ENCODE measurements at regions of chrX and their contacts with region 1.

Region 1: DNA sequence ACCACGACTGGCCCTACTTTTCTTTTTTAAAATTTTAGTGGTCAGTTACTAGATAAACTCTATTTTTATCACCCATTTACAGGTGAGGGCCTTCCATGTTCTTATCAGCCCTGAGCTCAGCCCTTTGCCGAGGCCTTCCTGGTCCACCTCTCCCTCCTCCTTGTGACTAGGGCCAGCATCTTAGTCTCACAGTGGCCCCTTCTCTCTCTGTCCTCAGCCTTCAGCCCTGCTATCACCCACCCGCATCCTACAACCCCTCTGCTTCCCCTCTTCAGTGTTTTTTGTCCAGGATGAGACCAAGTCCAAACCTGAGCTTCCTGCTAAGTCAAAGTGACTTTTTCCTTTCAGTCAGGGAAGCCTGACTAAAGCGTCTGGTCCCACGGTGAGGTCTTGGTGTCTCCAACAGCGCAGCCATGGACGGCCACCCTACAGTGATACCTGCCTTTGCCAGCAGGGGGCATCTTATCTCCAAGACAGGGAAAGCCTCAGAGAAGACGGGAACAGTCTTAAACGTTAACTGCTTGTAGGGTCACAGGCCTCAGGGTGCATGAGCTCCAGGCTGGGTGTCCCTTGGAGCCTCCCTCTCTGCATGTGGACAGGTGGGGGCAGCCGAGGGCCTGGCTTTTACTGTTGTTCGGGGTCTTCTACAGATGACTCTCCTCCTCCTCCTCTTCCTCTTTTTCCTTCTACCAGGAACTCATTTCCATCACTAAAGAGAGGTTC is 11.7 kb upstream of the GAGE10 start:
- DNase-seq: peak; percentile 84
- H3K4me3 ChIP-seq: no peak overlapping the region
- H3K27ac ChIP-seq: no peak overlapping the region
- H3K4me1 ChIP-seq: peaks cover 0 to 11% (median 1%) of the 10 kb centered on the region in 6 donors
- H3K27me3 ChIP-seq: no peaks in the 10 kb centered on the region
- CTCF ChIP-seq: peak; percentile 53 to 78 (median 66)
- POLR2A ChIP-seq: no peak

Region 2: DNA sequence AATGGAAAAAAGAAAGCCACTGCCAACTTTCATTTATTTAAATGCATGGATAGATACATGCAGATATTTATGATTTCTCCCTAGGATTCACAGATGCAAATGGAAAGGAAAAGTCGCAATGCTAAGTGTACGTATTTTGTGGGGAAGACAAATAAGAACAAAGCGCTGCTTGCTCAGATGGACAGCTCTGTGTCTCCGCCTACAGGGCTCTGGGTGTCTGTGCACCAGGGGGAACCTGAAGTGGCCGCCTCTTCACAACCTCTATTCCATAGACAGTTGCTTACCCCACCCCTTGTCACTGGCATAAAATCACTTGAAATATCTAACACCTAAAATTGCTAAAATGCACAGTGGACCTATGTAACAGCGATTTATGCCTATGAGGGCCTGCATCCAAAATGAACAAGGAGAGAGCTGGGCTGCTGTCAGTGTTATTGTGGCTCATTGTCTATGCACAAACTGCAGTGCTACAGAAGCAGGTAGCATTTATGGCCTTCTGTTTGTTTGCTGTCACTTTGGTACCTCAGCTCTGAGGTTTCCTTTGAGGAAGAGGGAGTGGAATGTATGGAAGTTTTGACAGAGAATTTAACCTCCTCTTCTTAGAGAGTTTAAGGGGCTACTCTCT is 462.6 kb after region 1 on chrX:
- intact Hi-C with region 1: loop called (anchors 2 kb)
- DNase-seq: no peak
- H3K4me3 ChIP-seq: no peak overlapping the region
- H3K27ac ChIP-seq: no peak overlapping the region
- H3K4me1 ChIP-seq: no peaks in the 10 kb centered on the region
- H3K27me3 ChIP-seq: peaks cover 0 to 29% (median 0%) of the 10 kb centered on the region in 7 donors
- CTCF ChIP-seq: peak in 10 of 11 experiments; percentile 17 to 72 (median 60)
- POLR2A ChIP-seq: no peak